ENCODE measurements at regions of chr6 and their contacts with region 1.

Region 1: GRCh38 chr6:142966294-142966693 is 21.3 kb upstream of the HIVEP2 start:
- DNase-seq: no peak
- H3K4me3 Mint-ChIP-seq: no peak overlapping the region
- H3K27ac Mint-ChIP-seq: no peak overlapping the region
- H3K4me1 Mint-ChIP-seq: peaks cover 6% of the 10 kb centered on the region
- H3K27me3 Mint-ChIP-seq: no peaks in the 10 kb centered on the region

Region 2: DNA sequence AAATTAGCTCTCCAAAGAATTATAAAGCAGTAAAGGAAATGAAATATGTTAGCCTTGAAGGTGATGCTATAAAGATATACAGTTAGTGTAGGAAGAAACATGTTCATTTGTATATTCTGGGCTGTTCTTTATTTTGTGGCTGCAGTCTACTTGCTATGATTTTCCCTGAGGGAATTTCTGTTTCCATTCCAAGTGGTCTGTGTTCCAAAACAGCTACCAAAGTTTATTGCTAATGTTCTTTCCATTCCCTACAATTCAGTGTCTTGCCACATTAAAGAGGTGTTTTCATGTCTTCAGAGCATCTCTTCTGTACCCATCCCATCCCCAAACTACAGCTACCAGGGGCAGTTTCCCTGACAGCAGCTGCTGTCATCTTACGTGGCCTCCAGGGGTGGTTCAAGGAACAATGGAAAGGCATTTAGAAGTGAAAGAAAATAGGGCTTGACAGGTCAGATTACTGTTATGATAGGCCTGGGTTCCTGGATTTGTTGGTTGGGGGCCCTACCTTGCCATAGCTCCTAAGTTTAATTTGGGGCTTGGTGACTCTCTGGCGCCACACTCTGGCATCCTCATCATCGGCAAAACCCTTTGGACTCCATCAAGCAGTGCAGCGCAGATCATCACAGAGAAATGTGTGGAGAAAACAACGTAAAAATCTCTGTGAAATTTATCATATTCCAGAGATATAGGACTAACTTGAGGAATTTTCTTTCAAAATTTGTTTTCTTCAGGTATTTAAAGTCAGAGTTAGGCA is 60.6 kb after region 1 on chr6:
- intact Hi-C with region 1: loop called (anchors 5 kb)
- DNase-seq: peak; percentile 9
- H3K4me3 Mint-ChIP-seq: no peak overlapping the region
- H3K27ac Mint-ChIP-seq: no peak overlapping the region
- H3K4me1 Mint-ChIP-seq: peaks cover 11% of the 10 kb centered on the region
- H3K27me3 Mint-ChIP-seq: no peaks in the 10 kb centered on the region

Measured in activated T-helper 1 cell treated with anti-CD3 and anti-CD28 coated beads, Interleukin-12 subunit alpha, Interleukin-12 subunit beta, Interleukin-2, Interleukin-4 antibody, amounts not matched to agents 30 ng/mL and 10 ng/mL and 1 ng/mL, durations not matched to agents 14 hours and 24 hours and 36 hours (primary cell).